ENCODE measurements at regions of chr20 and their contacts with region 1.

Region 1: GRCh38 chr20:21490095-21490494 is 23.8 kb downstream of the NKX2-2 start:
- DNase-seq: no peak

Region 2: DNA sequence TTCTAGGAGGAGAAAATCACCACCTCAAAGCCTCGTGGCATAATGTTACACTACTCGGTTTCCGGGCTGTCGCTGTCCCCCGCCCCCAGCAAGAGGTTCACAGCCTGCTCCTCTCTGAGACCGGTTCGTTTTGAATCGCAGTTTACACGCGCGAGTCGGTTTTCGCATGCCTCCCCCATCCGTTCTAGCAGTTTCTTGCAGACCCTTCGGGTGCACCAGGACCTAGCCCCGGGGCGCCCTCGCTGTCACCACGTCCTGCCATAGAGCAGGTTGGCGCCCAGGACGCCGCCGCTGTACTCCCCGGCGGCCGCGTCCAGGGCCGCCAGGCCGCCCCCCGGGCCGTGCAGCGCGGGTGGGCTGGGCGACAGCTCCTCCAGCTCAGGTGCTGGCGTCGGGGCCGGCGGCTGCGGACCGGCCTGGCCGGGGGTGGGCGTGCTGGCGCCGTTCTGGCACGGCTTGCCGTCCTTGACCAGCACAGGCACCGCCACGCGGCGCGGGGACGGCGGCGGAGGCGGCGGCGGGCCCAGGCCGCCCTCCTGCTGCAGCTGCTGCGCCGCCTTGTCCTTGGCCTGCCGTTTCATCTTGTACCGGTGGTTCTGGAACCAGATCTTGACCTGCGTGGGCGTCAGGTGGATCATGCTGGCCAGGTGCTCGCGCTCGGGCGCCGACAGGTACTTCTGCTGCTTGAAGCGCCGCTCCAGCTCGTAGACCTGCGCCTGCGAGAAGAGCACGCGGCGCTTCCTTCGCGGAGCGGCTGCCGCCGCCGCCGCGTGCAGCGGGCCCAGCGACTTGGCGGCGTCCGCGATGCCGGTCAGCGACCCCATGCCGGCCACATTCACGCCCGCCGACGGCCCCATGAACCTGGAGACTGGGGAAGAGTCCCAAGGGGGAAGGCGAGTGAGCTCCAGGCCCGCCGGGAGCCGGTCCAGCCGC is 94.2 kb before region 1 on chr20:
- intact Hi-C with region 1: loop called (anchors 10 kb)
- DNase-seq: peak in 3 of 10 donors; percentile 9 to 73 (median 57)